Mammary epithelial cell (primary cell): ENCODE measurements at regions of chr11 and their contacts with region 1.

Region 1: DNA sequence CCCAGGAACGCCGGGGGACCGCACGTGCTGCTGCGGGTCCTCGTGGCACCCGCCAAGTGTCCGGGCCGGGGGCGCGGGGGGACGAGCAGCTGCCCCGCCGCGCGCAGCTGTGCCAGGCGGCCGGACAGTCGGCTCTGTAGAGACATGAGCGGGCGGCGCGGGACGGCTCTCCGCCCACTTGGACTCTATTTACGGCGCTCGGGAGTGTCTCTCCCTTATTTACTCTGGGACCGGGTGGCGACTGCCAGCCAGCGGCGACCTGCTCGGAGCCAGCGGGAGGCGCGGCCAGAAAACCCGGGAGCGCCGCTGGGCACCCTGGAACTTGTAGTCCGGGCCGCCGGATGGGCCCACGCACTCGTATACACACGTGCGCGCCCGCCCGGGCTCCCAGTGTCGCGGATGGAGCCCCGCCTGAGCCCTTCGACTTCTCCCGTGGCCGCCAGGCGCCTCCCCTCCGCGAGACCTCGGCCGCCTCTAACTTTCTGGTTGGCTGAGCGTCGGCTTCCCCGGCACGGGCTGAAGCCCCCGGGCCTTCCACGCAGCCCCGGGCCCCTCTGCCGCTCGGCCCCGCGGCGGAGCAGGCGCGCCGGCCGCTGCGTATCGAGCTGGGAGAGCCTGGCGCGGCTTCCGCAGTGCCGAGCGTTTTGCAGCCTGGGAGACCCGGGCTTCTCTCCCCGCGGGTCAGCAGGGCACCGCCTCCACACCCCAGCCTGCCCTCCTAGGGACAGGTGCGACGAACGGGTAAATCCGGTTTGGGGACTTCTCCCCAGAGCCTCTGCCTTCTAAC is at the start of gene MACROD1:
- DNase-seq: peak; percentile 82
- H3K4me3 ChIP-seq: peak within 1 kb of the TSS; percentile 54 to 73 (median 69)
- H3K27ac ChIP-seq: no peak within 1 kb of the TSS
- H3K4me1 ChIP-seq: peaks cover 4% of the 10 kb centered on the region
- H3K27me3 ChIP-seq: no peaks in the 10 kb centered on the region
- CTCF ChIP-seq: no peak
- total RNA-seq, gene MACROD1: 11.4 to 13.2 TPM

Region 2: DNA sequence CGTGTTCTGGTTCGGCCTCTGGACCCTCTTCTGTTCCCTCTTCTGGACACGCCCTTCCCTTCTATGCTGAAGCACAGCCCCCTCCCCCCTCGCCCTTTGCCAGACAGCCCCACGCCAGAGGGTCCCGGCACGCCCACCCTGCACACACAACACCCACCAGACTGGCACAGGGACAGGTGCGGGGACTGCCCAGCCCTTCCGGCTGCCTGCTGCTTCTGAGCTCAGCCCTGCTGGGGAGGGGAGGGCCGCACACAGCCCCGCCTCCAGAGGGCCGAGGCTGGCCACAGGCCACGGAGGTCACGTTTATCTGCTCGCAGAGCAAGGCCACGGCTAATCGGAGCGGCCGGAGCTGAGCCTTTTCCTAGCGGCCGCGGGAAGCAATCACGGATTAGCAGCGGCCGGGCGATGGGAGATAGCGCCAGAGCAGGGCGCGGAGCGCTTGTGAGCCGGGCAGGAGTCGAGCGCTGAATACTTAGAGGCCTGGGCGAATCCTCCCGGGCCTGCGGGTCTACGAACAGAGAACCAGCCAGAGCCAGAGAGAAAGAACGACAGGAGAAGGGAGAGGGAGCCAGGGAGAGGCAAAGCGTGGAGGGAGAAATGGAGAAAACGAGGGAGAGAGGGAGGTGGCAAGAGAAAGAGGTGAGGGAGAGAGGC is 158.3 kb before region 1 on chr11:
- CTCF ChIA-PET with region 1: no interaction called
- dilution Hi-C with region 1: loop called (anchors 5 kb)
- in situ Hi-C with region 1: no loop called
- intact Hi-C with region 1: no loop called
- DNase-seq: no peak
- H3K4me3 ChIP-seq: peak overlapping the region in 2 of 3 experiments; percentile 29 to 40
- H3K27ac ChIP-seq: no peak overlapping the region
- H3K4me1 ChIP-seq: peaks cover 13% of the 10 kb centered on the region
- H3K27me3 ChIP-seq: no peaks in the 10 kb centered on the region
- CTCF ChIP-seq: peak in 1 of 2 donors; percentile 20

Region 3: GRCh38 chr11:64078284-64078683 is 87.8 kb before region 1 on chr11:
- CTCF ChIA-PET with region 1: no interaction called
- dilution Hi-C with region 1: loop called (anchors 5 kb)
- in situ Hi-C with region 1: no loop called
- intact Hi-C with region 1: no loop called
- DNase-seq: no peak
- H3K4me3 ChIP-seq: no peak overlapping the region
- H3K27ac ChIP-seq: no peak overlapping the region
- H3K4me1 ChIP-seq: no peaks in the 10 kb centered on the region
- H3K27me3 ChIP-seq: peaks cover 10% of the 10 kb centered on the region
- CTCF ChIP-seq: no peak

Region 4: GRCh38 chr11:64131683-64132190 is 34.3 kb before region 1 on chr11:
- CTCF ChIA-PET with region 1: no interaction called
- dilution Hi-C with region 1: no loop called
- in situ Hi-C with region 1: no loop called
- intact Hi-C with region 1: no loop called
- DNase-seq: no peak
- H3K4me3 ChIP-seq: no peak overlapping the region
- H3K27ac ChIP-seq: no peak overlapping the region
- H3K4me1 ChIP-seq: no peaks in the 10 kb centered on the region
- H3K27me3 ChIP-seq: no peaks in the 10 kb centered on the region
- CTCF ChIP-seq: no peak

Region 5: DNA sequence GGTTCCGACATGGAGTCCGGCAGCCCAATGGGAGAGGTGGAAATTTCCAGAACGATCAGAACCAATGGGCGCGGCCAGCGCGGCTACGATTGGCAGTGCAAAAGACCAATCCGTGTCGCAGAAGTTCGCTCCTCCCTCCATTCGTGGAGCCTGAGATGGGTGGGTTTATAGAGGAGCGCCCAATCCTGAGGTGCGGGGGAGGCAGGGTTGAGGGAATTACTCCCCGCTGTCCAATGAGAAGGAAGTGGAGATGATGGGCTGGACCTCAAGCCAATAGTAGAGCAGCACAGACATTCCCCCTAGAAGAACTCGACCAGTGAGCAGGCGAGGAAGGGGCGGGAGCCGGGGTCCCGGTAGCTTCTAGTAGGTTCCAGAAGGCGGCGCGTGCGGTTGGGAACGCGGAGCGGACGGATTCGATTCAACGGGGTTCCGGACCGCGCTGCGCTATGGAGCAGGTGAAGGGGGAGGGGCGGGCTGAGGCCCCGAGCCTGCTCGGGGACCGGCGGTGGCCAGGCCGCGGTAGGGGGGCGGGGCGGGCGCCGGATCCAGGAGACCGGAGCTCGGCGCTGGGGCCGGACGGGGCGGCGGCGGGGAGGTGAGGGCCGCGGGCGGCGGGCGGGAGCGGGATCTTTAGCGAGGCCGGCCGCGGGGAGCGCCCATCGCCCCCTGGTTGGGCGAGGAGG is 19.9 kb after region 1 on chr11 and contains the start of gene STIP1:
- CTCF ChIA-PET with region 1: no interaction called
- dilution Hi-C with region 1: no loop called
- in situ Hi-C with region 1: no loop called
- intact Hi-C with region 1: loop called (anchors 2 kb)
- DNase-seq: peak; percentile 100
- H3K4me3 ChIP-seq: peak within 1 kb of the TSS; percentile 45 to 72 (median 72)
- H3K27ac ChIP-seq: peak within 1 kb of the TSS; percentile 55
- H3K4me1 ChIP-seq: peaks cover 14% of the 10 kb centered on the region
- H3K27me3 ChIP-seq: no peaks in the 10 kb centered on the region
- CTCF ChIP-seq: peak in 1 of 2 donors; percentile 64
- total RNA-seq, gene STIP1: 105 to 173 TPM

Region 6: GRCh38 chr11:64204464-64204989 is 38.5 kb after region 1 on chr11:
- CTCF ChIA-PET with region 1: no interaction called
- dilution Hi-C with region 1: no loop called
- in situ Hi-C with region 1: no loop called
- intact Hi-C with region 1: no loop called
- DNase-seq: peak; percentile 81
- H3K4me3 ChIP-seq: no peak overlapping the region
- H3K27ac ChIP-seq: no peak overlapping the region
- H3K4me1 ChIP-seq: peaks cover 5% of the 10 kb centered on the region
- H3K27me3 ChIP-seq: no peaks in the 10 kb centered on the region
- CTCF ChIP-seq: peak; percentile 80 to 91

Region 7: GRCh38 chr11:64263021-64263946 is 97.2 kb after region 1 on chr11:
- CTCF ChIA-PET with region 1: no interaction called
- dilution Hi-C with region 1: loop called (anchors 5 kb)
- in situ Hi-C with region 1: no loop called
- intact Hi-C with region 1: no loop called
- DNase-seq: peak; percentile 61
- H3K4me3 ChIP-seq: no peak overlapping the region
- H3K27ac ChIP-seq: no peak overlapping the region
- H3K4me1 ChIP-seq: peaks cover 28% of the 10 kb centered on the region
- H3K27me3 ChIP-seq: no peaks in the 10 kb centered on the region
- CTCF ChIP-seq: no peak